OCI-LY7 (cell line): ENCODE measurements at regions of chr1 and their contacts with region 1.

Region 1: DNA sequence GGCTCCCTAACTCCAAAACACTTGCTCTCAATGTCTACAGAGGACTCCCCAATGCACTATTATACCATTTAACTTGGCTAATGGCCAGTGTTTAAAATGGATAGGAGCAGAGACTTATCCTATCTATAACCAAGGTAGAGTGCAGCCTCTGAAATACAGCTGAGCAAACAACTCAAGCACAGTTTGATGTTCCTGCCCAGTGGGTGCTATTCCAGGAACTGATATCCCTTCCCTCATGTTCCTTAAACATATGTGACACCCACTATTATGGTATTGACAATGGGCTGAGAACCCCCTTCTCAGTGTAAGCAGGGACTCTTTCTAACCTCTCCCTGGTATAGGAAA is 51.7 kb downstream of the SH3GLB1 start:
- DNase-seq: no peak
- H3K4me3 ChIP-seq: no peak overlapping the region
- H3K27ac ChIP-seq: peak overlapping the region; percentile 39
- H3K4me1 ChIP-seq: peaks cover 35% of the 10 kb centered on the region
- CTCF ChIP-seq: no peak

Region 2: DNA sequence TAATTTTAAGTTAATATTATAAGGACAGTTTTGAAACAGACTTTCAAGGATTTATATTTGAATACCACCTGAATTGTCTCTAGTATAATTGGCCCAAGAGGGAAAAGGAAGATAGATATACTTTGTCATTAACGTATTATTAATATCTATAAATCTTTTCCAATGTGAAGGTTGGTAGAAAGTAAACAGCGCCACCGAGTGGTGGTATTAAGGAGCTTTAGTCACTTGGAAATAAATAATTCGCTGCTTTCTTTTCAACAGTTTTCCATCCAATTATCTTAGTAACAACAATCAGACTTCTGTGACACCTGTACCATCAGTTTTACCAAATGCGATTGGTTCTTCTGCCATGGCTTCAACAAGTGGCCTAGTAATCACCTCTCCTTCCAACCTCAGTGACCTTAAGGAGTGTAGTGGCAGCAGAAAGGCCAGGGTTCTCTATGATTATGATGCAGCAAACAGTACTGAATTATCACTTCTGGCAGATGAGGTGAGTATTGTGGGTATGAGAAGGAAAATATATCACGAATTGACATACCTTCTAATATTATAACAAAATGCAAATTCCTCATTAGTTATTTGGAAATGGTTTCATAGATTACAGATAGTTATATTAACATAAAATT is 14.0 kb before region 1 on chr1:
- CTCF ChIA-PET with region 1: no interaction called
- POLR2A ChIA-PET with region 1: interaction called, 11 read pairs
- intact Hi-C with region 1: no loop called
- DNase-seq: peak; percentile 56
- H3K4me3 ChIP-seq: no peak overlapping the region
- H3K27ac ChIP-seq: no peak overlapping the region
- H3K4me1 ChIP-seq: peaks cover 7% of the 10 kb centered on the region
- CTCF ChIP-seq: peak; percentile 98

Region 3: DNA sequence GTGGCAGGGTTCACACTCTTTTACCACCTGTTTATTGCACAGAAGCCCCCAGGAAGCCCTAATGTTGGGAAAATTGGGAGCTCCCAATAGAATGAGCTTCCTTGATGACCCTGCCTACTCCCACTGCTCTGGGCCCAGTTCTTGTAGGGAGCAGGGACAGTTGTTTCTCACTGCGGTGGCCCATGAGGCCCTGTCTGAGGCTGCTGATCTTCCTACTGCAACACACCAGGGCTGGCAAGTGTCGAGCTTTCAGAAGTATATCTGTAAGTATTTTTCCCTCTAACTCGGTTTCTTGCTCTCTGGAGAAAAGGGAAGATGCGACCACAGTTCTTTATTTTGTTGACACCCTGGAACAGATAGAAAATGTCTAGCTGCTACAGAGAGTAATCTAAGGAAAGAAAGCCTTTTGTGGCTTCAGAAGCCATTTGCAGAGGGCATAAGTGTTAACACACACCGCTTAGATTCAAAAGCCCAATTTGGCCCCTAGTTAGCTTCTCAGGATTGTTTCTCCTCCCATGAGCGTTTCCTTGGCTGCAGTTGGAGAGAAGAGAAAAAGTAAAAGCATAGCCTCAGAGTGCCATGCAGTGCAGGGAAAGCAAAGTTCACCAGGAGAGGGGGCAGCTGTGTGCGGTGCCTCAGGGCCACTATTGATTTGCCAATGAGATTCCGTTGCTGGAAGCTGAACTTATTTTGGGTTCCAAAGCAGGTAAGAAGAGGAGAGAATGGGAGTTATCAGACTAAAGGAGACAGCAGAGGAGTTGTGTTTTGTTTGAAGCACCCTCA is 55.3 kb after region 1 on chr1:
- CTCF ChIA-PET with region 1: no interaction called
- POLR2A ChIA-PET with region 1: no interaction called
- intact Hi-C with region 1: no loop called
- DNase-seq: no peak
- H3K4me3 ChIP-seq: no peak overlapping the region
- H3K27ac ChIP-seq: no peak overlapping the region
- H3K4me1 ChIP-seq: no peaks in the 10 kb centered on the region
- CTCF ChIP-seq: no peak